Dorsolateral prefrontal cortex (tissue), 120 donors: ENCODE measurements at regions of chr10 and their contacts with region 1.

Region 1: DNA sequence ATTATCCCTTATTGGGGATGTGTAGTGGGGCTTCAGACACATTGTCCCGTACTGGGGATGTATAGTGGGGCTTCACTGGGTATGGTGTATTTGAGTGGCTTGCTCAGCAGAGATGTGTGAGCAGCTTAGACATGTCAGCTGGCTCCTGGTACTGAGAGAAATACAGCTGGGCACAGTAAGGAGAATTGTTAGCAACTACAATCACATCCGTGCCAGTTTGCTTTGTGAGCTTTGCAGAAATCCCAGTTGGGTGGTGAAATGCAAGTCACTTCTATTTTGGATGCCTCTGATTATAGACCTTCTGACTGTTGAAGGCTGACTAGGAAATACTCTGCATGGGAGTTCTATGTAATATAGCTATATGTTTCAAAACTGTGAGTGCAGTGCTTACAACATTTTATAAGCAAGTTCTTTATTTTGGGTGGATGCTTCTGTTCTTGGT is 10.8 kb downstream of the CCNY start:
- DNase-seq: peak in 3 of 10 donors; percentile 31 to 70 (median 53)
- H3K4me3 ChIP-seq: peak overlapping the region in 51 of 59 donors; percentile 1 to 61 (median 36)
- H3K27ac ChIP-seq: peak overlapping the region; percentile 32 to 95 (median 88)
- H3K27me3 ChIP-seq: no peaks in the 10 kb centered on the region
- CTCF ChIP-seq: peak in 4 of 56 donors; percentile 10 to 25 (median 14)

Region 2: DNA sequence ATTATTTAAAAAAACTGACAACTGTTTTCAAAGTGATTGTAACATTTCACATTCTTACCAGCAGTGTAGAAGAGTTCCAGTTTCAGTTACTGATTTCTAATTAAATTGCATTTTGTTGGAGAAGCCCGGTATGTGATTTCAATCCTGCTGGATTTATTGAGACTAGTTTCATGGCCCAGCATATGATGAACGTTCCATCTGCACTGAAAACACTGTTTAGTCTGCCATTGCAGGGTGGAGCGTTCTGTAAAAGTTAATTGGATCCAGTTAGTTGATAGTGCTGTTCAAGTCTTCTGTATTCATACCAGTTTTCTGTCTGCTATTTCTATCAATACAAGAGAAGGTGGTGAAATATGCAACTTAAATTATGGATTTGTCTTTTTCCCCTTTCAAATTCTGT is 48.1 kb before region 1 on chr10:
- intact Hi-C with region 1: loop called in 1 of 2 experiments (anchors 5 kb)
- DNase-seq: no peak
- H3K4me3 ChIP-seq: no peak overlapping the region
- H3K27ac ChIP-seq: peak overlapping the region in 2 of 59 donors; percentile 67 to 77
- H3K27me3 ChIP-seq: no peaks in the 10 kb centered on the region
- CTCF ChIP-seq: no peak

Region 3: DNA sequence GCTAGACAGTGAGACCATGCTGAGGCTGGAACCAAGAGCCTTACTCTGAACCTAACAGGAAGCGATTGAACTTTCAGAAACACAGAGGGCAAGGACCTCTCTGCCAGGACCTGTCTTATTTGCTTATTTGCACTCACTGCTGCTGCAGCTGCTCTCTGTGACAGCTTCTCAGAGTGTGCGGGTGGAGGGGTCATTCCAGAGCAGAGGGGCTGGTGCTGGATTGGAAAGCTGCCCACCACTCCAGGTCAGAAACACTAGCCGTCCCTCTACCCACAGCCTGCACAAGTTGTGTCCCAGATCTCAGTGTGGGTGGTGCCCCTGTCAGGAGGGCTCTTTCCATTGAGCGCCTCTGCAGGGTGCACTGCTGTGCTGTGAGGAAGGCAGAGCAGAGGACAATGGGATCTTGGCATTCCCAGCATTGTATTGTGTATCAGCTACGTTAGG is 115.4 kb after region 1 on chr10:
- intact Hi-C with region 1: loop called in 1 of 2 experiments (anchors 5 kb)
- DNase-seq: peak in 3 of 10 donors; percentile 56 to 65 (median 62)
- H3K4me3 ChIP-seq: peak overlapping the region in 6 of 59 donors; percentile 4 to 28 (median 14)
- H3K27ac ChIP-seq: peak overlapping the region; percentile 27 to 100 (median 92)
- H3K27me3 ChIP-seq: no peaks in the 10 kb centered on the region
- CTCF ChIP-seq: peak in 4 of 56 donors; percentile 11 to 31 (median 22)